ENCODE measurements at regions of chr7 and their contacts with region 1.

Region 1: GRCh38 chr7:145729691-145730090 is 386.9 kb upstream of the CNTNAP2 start:
- DNase-seq: no peak
- H3K4me3 ChIP-seq: no peak overlapping the region
- H3K27ac ChIP-seq: no peak overlapping the region
- H3K4me1 ChIP-seq: no peaks in the 10 kb centered on the region
- H3K27me3 ChIP-seq: no peaks in the 10 kb centered on the region
- CTCF ChIP-seq: no peak
- POLR2A ChIP-seq: no peak

Region 2: DNA sequence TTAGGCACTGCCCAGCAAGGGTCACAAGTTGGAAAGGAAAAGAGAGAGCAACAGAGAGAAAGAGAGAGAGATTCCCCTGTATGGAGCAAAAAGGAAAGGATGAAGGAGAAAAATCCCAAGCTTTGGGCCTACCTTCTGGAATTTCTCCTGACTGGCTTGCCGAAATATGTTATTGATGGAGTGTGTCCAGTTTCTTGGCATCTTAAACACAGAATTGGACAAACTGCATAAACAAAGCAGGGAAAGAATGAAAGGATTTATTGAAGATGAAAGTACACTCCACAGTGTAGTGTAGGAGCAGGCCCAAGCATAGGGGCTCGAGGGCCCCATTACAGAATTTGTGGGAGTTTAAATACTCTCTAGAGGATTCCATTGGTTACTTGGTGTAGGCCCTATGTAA is 240.9 kb before region 1 on chr7:
- intact Hi-C with region 1: loop called (anchors 5 kb)
- DNase-seq: no peak
- H3K4me3 ChIP-seq: no peak overlapping the region
- H3K27ac ChIP-seq: no peak overlapping the region
- H3K4me1 ChIP-seq: no peaks in the 10 kb centered on the region
- H3K27me3 ChIP-seq: no peaks in the 10 kb centered on the region
- CTCF ChIP-seq: no peak
- POLR2A ChIP-seq: no peak